ENCODE measurements at regions of chr6 and their contacts with region 1.

Region 1: DNA sequence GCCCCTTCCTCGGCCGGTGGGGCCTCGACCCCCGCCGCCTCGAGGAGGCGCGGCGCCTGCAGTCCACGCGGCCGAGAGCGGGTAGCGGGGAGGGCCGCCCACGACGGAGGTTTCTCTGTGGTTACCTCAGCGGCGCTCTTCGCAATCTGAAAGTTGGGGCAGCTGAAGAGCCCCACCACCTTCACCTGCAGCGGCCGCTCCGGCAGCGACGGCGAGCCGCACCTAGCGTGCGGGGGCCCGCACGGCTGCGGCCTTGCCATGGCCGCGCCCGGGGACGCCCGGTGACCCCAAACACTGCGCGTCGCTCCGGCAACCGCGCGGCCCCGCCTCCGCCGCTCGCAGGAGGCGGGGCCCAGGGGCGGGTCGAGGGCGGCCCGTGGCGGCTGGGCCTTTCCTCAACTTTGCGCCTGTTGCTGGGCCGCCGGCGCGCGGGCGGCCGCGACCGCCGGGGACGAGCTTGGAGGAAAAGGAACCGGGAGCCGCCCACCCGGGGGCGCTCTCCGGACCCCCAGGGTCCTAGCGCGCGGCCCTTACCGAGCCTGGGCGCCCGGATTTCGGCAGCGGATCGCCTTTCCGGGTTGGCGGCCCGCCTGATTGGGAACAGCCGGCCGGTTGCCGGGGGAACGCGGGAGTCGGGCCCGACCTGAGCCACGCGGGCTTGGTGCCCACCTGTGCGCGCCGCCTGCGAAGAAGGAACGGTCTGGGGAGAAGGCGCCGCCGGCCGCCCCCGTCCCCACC is at the starts of genes PPIL6 and SMPD2:
- DNase-seq: peak; percentile 73 to 86 (median 79)
- H3K4me3 ChIP-seq: peak within 1 kb of the TSS; percentile 69
- H3K4me3 Mint-ChIP-seq: peak within 1 kb of the TSS; percentile 90 to 95 (median 93)
- H3K27ac ChIP-seq: peak within 1 kb of the TSS; percentile 90
- H3K27ac Mint-ChIP-seq: peak within 1 kb of the TSS; percentile 94 to 99 (median 96)
- H3K4me1 ChIP-seq: peaks cover 21% of the 10 kb centered on the region
- H3K4me1 Mint-ChIP-seq: peaks cover 22 to 32% (median 32%) of the 10 kb centered on the region in 3 donors
- H3K27me3 ChIP-seq: no peaks in the 10 kb centered on the region
- H3K27me3 Mint-ChIP-seq: peaks cover 0 to 3% of the 10 kb centered on the region in 2 donors
- total RNA-seq, gene PPIL6: 0.13 TPM in 1 of 2 experiments, not detected in the other
- total RNA-seq, gene SMPD2: 15.1 to 15.8 TPM

Region 2: DNA sequence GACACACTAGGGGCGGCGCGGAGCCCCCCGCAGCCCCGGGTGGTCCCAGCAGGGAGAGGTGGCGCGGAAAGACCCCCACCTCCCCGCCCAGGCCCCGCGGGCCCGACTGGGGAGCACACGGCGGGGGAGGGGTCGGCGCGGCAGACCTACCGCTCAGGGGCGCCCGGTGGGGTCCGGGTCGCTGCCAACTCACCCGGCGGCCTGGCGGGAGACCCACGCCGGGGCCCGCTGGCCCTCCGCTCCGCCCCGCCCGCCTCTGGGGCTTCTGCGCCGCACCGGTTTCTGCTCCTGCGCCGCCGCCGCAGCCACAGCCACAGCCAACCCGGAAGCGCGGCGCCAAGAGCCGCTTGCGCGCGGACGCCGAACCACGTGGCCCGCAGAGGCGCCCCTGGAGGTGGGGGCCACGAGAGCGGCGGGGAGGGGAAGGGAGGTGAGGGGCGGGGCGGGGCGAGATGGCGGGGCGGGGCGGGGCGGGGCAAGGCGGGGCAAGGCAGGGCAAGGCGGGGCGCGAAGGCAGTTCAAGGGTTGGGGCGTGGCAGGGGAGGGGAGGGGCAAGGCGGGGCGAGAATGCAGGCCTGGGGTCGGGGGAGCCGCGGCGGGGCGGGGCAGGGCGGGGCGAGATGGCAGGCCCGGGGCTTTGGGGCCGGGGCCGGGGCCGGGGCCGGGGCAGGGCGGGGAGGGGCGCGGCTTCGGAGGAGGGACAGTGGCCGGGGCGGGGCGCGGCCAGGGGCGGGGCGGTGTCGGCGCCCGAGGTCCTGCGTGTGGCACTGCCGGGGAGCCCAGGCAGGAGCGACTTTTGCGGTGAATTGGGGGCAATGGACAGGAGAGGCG is 42.6 kb after region 1 on chr6 and contains the start of gene ZBTB24:
- CTCF ChIA-PET with region 1: interaction called, 13 read pairs
- POLR2A ChIA-PET with region 1: interaction called, 9 read pairs
- DNase-seq: peak; percentile 85 to 93 (median 88)
- H3K4me3 ChIP-seq: peak within 1 kb of the TSS; percentile 88
- H3K4me3 Mint-ChIP-seq: peak within 1 kb of the TSS; percentile 92 to 99 (median 93)
- H3K27ac ChIP-seq: peak within 1 kb of the TSS; percentile 60
- H3K27ac Mint-ChIP-seq: peak within 1 kb of the TSS; percentile 83 to 95 (median 91)
- H3K4me1 ChIP-seq: peaks cover 42% of the 10 kb centered on the region
- H3K4me1 Mint-ChIP-seq: peaks cover 41 to 52% (median 52%) of the 10 kb centered on the region in 3 donors
- H3K27me3 ChIP-seq: no peaks in the 10 kb centered on the region
- H3K27me3 Mint-ChIP-seq: no peaks in the 10 kb centered on the region
- total RNA-seq, gene ZBTB24: 19.5 to 19.9 TPM

Region 3: DNA sequence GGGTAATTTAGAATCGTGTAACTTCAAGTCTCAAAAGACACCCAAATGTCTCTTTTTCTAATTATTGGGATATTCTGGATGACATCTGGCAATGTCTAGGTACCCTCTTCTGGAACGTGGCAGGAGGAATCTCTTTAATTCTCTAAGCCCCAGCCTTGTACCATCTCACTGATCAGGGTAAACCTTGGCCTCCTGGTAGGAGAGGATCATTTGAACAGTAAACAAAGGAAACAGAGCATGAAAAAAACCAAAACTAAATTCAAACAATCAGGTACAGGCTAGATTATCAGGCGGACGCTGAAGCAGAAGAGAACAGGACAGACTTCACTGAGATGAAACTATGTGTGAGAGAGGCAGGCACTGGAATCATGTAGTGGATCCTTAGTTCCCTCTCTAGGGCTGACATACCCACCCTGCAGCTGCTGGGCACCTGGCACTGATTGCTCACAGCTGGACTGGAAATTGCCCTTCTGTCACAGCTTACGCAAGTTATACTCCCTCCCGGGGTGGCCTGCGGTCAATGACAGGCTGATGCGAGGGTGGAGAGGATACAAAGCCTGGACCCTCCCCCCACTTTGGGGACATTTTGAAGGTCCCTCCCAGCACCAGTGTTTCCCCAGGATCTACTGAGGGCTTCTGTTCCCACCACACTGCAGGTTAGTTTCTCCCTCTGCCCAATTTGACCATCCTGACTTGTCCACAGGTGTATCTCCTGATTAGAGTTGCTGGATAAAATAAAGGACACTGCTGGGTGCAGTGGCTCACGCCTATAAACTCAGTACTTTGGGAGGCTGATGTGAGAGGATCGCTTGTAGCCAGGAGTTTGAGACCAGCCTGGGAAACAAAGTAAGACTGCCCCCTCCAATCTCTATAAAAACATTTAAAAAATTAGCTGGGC is 63.1 kb after region 1 on chr6:
- CTCF ChIA-PET with region 1: no interaction called
- POLR2A ChIA-PET with region 1: no interaction called
- DNase-seq: no peak
- H3K4me3 ChIP-seq: no peak overlapping the region
- H3K4me3 Mint-ChIP-seq: no peak overlapping the region
- H3K27ac ChIP-seq: no peak overlapping the region
- H3K27ac Mint-ChIP-seq: no peak overlapping the region
- H3K4me1 ChIP-seq: no peaks in the 10 kb centered on the region
- H3K4me1 Mint-ChIP-seq: no peaks in the 10 kb centered on the region
- H3K27me3 ChIP-seq: no peaks in the 10 kb centered on the region
- H3K27me3 Mint-ChIP-seq: peaks cover 5 to 6% of the 10 kb centered on the region in 2 donors